ENCODE measurements at regions of chr5 and their contacts with region 1.

Region 1: DNA sequence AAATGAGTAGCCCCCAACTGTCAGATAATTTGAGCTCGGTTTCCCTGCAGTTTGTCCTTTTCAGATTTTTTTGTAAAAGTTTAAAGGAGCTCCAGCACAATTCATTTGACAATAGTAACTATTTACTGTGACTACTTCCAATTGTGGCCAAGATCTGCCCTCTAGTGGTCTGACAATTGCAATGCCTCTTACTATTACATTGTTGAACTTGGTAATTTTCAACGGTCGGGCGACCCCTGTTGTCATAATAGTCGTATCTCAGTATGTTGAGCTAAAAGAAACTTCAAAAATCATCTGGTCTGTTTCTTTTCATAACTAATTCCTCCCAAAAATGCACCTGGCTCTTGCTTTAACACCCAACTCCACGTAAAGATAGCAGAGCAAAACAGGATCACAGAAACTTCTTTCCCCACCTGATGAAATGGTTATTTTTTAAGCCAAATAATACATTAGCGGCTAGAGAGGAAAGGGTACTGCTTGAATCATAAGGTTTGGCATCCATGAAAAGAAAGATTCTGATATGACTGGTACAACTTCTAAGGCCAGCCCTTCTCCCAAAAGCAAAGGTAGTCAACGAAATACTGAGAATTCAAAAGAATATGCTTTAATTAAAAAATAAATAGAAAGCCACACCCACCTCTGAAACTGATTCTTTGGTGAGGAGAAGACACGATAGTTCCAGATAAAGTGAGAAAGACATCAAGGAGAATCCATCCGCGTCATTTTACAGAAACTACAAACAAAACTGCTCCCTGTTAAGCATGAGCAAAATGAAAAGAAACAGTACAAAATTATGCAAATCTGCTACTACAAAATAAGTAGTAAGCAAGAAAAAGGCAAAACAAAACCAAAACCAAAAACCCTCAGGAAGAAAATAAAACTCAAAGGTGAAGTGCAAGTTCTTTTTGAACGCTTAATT is 76.9 kb upstream of the HTR4 start:
- DNase-seq: peak in 3 of 4 donors; percentile 64 to 93 (median 84)
- ATAC-seq: peak; percentile 93
- H3K4me3 ChIP-seq: no peak overlapping the region
- H3K27ac ChIP-seq: no peak overlapping the region
- H3K4me1 ChIP-seq: peaks cover 0 to 10% of the 10 kb centered on the region in 2 donors
- H3K27me3 ChIP-seq: no peaks in the 10 kb centered on the region
- CTCF ChIP-seq: peak; percentile 85 to 92

Region 2: DNA sequence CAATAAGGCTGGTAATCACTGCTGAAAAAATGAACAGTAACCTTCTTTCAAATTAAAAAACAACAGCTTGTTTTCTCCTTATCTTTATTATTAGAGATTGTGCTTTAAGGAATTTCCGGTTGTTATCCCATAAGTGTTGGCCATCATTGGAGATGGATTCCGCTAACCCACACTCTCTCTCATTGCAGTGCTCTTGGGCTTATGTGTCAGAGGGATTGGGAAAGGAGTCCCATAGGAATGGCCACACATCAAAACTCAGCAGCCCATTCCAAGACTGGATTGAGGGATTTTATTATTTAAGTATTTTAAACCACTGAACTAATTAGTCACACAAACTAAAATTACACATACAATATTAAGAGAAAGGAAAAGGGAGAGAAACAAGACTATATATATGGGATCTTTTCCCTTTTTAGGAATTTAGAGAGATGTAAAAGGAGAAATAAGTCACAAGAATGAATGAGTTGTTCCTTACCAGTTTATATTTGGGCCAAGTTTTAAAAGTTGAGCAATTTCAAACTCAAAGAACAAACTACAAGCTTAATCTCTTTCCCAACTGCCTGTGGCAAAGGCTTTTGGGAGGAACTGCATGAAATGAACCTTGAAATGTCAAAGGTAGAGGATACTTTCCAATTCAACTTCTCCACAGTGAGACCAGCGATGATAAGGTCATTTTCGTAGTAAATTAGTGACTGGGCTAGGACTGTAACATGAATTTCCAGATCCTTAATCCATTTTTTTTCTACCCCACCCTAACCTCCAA is 526.0 kb before region 1 on chr5:
- intact Hi-C with region 1: no loop called
- DNase-seq: no peak
- ATAC-seq: peak; percentile 30
- H3K4me3 ChIP-seq: no peak overlapping the region
- H3K27ac ChIP-seq: peak overlapping the region in 1 of 2 donors; percentile 42
- H3K4me1 ChIP-seq: peaks cover 11 to 16% of the 10 kb centered on the region in 2 donors
- H3K27me3 ChIP-seq: no peaks in the 10 kb centered on the region
- CTCF ChIP-seq: no peak

Region 3: GRCh38 chr5:148443998-148444397 is 287.2 kb before region 1 on chr5:
- intact Hi-C with region 1: loop called in 1 of 2 experiments (anchors 10 kb)
- DNase-seq: peak in 2 of 4 donors; percentile 70 to 80
- ATAC-seq: peak; percentile 93
- H3K4me3 ChIP-seq: no peak overlapping the region
- H3K27ac ChIP-seq: no peak overlapping the region
- H3K4me1 ChIP-seq: no peaks in the 10 kb centered on the region
- H3K27me3 ChIP-seq: no peaks in the 10 kb centered on the region
- CTCF ChIP-seq: peak; percentile 65 to 66

Region 4: GRCh38 chr5:148820461-148821395 is 89.5 kb after region 1 on chr5:
- intact Hi-C with region 1: no loop called
- DNase-seq: no peak
- ATAC-seq: peak; percentile 30
- H3K4me3 ChIP-seq: no peak overlapping the region
- H3K27ac ChIP-seq: no peak overlapping the region
- H3K4me1 ChIP-seq: peaks cover 0 to 66% of the 10 kb centered on the region in 2 donors
- H3K27me3 ChIP-seq: no peaks in the 10 kb centered on the region
- CTCF ChIP-seq: peak; percentile 43 to 53

Region 5: DNA sequence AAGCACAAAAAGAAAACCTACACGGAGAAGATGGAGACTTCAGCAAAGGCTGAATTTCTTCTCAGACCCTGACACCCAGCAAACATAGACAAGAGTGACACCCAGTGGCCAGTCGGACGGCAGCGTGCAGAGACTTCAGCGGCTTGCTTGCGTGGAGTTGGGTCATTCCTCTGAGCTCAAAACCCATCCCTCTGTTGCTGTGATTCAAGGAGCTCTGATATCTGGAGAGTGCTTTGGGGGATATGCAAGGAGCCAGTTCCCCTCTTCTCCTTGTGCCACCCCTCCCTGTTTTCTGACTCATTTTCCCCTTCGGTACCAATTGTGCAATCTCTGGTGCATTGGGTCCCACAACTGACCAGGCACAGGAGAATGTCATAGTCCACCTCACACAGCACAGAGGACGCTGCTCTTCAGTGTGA is 304.2 kb after region 1 on chr5:
- intact Hi-C with region 1: loop called in 1 of 2 experiments (anchors 10 kb)
- DNase-seq: peak; percentile 55 to 87 (median 77)
- ATAC-seq: peak; percentile 98
- H3K4me3 ChIP-seq: no peak overlapping the region
- H3K27ac ChIP-seq: no peak overlapping the region
- H3K4me1 ChIP-seq: peaks cover 0 to 53% of the 10 kb centered on the region in 2 donors
- H3K27me3 ChIP-seq: no peaks in the 10 kb centered on the region
- CTCF ChIP-seq: peak; percentile 81 to 82

Region 6: DNA sequence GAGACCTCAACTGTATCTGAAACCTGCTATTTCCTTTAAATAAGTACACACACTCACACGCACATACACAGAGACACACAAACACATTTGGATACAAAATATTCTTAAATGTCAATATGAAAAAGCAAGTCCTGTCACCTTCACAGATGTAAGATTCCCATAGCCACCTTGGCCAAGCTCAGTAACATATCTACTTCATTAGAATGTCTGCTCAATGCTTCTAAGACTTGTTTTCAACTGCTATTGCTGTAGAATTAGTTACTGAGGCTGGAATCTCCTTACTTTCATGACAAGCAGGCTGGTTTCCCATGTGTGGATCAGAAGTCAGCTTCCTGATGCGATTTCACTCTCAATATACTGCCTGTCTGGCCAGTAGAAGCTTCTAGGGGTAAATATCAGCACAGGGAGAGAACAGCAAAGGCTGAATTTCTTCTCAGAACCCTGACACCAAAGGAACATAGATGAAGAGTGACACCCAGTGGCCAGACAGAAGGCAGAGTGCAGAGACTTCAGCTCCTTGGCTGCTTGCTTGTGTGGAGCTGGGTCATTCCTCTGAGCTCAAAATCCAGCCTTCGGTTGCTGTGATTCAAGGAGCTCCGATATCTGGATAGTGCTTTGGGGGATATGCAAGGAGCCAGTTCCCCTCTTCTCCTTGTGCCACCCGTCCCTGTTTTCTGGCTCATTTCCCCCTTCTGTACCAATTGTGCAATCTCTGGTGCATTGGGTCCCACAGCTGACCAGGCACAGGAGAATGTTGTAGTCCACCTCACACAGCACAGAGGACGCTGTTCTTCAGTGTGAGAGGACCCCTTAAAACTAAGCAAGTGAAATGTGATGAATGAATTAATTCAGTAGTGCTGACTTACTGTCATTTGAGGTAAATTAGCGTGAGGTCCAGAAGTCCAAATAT is 383.5 kb after region 1 on chr5:
- intact Hi-C with region 1: loop called in 1 of 2 experiments (anchors 10 kb)
- DNase-seq: peak in 3 of 4 donors; percentile 47 to 81 (median 69)
- ATAC-seq: peak; percentile 99
- H3K4me3 ChIP-seq: no peak overlapping the region
- H3K27ac ChIP-seq: no peak overlapping the region
- H3K4me1 ChIP-seq: peaks cover 0 to 13% of the 10 kb centered on the region in 2 donors
- H3K27me3 ChIP-seq: no peaks in the 10 kb centered on the region
- CTCF ChIP-seq: peak; percentile 49 to 72

Measured in left lung (tissue), 14 donors.